ENCODE measurements at regions of chr6 and their contacts with region 1.

Region 1: DNA sequence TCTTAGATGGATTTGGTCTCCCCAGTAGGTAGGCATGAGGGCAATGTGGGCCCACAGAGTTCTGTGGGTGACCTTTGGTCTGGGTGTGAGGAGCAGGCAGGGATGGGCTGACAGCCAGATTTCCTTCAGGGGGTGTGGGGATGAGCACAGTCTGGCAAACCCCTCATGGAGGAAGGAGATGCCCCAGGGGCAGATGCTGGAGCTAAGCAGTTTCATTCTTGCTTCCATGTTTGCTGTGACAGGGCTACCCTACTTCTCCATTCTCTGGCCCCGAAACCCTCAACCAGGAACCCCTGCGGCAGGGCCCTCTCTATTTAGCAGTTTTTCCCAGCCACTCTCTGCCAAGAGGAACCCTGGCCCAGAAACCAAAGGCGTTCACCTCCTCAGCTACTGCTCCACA is 40.4 kb downstream of the GCLC start:
- DNase-seq: no peak
- ATAC-seq: peak in 1 of 4 donors; percentile 26
- H3K4me3 ChIP-seq: no peak overlapping the region
- H3K27ac ChIP-seq: no peak overlapping the region
- H3K4me1 ChIP-seq: no peaks in the 10 kb centered on the region
- H3K27me3 ChIP-seq: no peaks in the 10 kb centered on the region
- CTCF ChIP-seq: no peak

Region 2: DNA sequence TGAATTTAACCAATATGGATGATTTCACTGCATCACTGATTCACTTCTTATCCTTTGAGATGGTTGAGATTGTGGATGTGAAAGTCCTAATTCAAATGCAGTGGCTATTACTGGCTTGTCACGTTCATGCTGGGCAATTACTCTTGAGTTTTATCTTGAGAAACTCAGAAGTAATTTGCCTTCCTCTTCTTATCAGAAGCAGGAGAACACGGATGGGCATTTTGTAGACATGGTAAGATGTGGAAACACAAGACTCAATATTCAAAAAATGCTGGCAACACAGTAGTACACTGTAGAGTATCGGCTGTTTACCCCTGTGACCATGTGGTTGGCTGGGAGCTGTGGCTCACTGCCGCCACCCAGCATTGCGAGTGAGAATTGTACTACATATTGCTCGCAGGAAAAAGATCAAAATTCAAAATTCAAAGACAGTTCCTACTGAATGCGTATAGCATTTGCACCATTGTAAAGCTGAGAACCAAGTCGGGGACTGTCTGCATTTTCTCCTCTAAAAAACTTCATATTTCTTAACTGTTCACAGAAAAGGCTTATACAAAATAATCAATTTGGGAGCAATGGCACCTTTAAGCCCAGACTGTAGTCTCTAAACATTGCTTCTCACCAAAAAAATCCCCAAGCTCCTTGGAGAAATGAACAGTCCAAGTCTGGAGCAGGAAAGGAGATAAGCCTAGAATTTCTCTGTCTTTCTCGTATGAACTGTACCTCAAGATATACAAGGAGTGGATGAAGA is 93.8 kb before region 1 on chr6:
- intact Hi-C with region 1: no loop called
- DNase-seq: peak in 1 of 6 donors; percentile 10
- ATAC-seq: peak in 3 of 4 donors; percentile 66 to 82 (median 82)
- H3K4me3 ChIP-seq: no peak overlapping the region
- H3K27ac ChIP-seq: no peak overlapping the region
- H3K4me1 ChIP-seq: no peaks in the 10 kb centered on the region
- H3K27me3 ChIP-seq: no peaks in the 10 kb centered on the region
- CTCF ChIP-seq: no peak

Region 3: GRCh38 chr6:53664623-53665022 is 160.1 kb after region 1 on chr6:
- intact Hi-C with region 1: loop called in 2 of 3 experiments (anchors 10 kb)
- DNase-seq: no peak
- ATAC-seq: no peak
- H3K4me3 ChIP-seq: no peak overlapping the region
- H3K27ac ChIP-seq: no peak overlapping the region
- H3K4me1 ChIP-seq: no peaks in the 10 kb centered on the region
- H3K27me3 ChIP-seq: no peaks in the 10 kb centered on the region
- CTCF ChIP-seq: no peak